ENCODE measurements at regions of chr2 and their contacts with region 1.

Region 1: DNA sequence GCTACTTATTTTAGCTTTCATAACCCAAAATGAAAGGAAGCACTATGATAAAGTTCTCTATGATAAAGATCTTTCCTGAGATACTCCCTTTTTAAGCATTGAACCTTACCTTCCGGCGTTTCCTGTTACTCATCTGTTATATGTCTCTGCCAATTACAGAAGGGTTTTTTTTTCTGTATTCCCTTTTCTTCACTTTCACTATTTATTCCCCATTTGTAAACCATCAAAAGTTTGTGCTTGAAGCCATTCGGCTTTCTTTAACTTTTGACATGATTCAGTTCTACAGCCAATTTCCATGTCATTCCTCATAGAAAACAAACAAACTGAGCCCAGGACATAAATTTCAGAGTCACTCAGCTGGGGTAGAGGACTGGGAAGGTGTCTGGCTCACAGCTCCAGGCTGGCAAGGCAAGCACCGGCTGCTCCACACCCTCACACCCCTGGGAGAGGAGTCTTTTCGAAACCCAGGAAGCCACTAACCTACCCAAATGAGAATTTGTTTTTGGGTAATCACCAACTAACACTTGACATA is 429.4 kb upstream of the TRIB2 start:
- DNase-seq: peak in 1 of 2 donors; percentile 25
- ATAC-seq: peak in 4 of 8 donors; percentile 4 to 72 (median 50)
- H3K4me3 ChIP-seq: no peak overlapping the region
- H3K27ac ChIP-seq: peak overlapping the region in 3 of 10 donors; percentile 11 to 42 (median 36)
- H3K4me1 ChIP-seq: peaks cover 0 to 23% (median 10%) of the 10 kb centered on the region in 9 donors
- H3K27me3 ChIP-seq: no peaks in the 10 kb centered on the region
- CTCF ChIP-seq: no peak

Region 2: GRCh38 chr2:12397854-12398253 is 110.6 kb after region 1 on chr2:
- intact Hi-C with region 1: loop called in 1 of 10 experiments (anchors 5 kb)
- DNase-seq: peak; percentile 6 to 24
- ATAC-seq: peak in 5 of 8 donors; percentile 71 to 89 (median 77)
- H3K4me3 ChIP-seq: no peak overlapping the region
- H3K27ac ChIP-seq: peak overlapping the region in 5 of 10 donors; percentile 6 to 20 (median 13)
- H3K4me1 ChIP-seq: peaks cover 0 to 13% (median 4%) of the 10 kb centered on the region in 9 donors
- H3K27me3 ChIP-seq: no peaks in the 10 kb centered on the region
- CTCF ChIP-seq: no peak